ENCODE measurements at regions of chr2 and their contacts with region 1.

Region 1: GRCh38 chr2:170503971-170504809 is 210.9 kb upstream of the SP5 start:
- DNase-seq: peak; percentile 66
- H3K4me3 ChIP-seq: peak overlapping the region in 1 of 3 experiments; percentile 29
- H3K27ac ChIP-seq: peak overlapping the region; percentile 100
- H3K4me1 ChIP-seq: peaks cover 34% of the 10 kb centered on the region
- H3K27me3 ChIP-seq: no peaks in the 10 kb centered on the region
- CTCF ChIP-seq: no peak
- POLR2A ChIP-seq: no peak

Region 2: GRCh38 chr2:170022692-170023091 is 481.5 kb before region 1 on chr2:
- CTCF ChIA-PET with region 1: no interaction called
- POLR2A ChIA-PET with region 1: no interaction called
- dilution Hi-C with region 1: no loop called
- intact Hi-C with region 1: no loop called
- DNase-seq: no peak
- H3K4me3 ChIP-seq: no peak overlapping the region
- H3K27ac ChIP-seq: no peak overlapping the region
- H3K4me1 ChIP-seq: no peaks in the 10 kb centered on the region
- H3K27me3 ChIP-seq: no peaks in the 10 kb centered on the region
- CTCF ChIP-seq: no peak
- POLR2A ChIP-seq: no peak

Region 3: GRCh38 chr2:170530284-170530745 is 26.1 kb after region 1 on chr2:
- CTCF ChIA-PET with region 1: interaction called, 4 read pairs
- POLR2A ChIA-PET with region 1: no interaction called
- dilution Hi-C with region 1: no loop called
- intact Hi-C with region 1: loop called (anchors 1 kb)
- DNase-seq: peak; percentile 75
- H3K4me3 ChIP-seq: peak overlapping the region in 1 of 3 experiments; percentile 29
- H3K27ac ChIP-seq: no peak overlapping the region
- H3K4me1 ChIP-seq: peaks cover 21% of the 10 kb centered on the region
- H3K27me3 ChIP-seq: no peaks in the 10 kb centered on the region
- CTCF ChIP-seq: no peak
- POLR2A ChIP-seq: no peak

Region 4: DNA sequence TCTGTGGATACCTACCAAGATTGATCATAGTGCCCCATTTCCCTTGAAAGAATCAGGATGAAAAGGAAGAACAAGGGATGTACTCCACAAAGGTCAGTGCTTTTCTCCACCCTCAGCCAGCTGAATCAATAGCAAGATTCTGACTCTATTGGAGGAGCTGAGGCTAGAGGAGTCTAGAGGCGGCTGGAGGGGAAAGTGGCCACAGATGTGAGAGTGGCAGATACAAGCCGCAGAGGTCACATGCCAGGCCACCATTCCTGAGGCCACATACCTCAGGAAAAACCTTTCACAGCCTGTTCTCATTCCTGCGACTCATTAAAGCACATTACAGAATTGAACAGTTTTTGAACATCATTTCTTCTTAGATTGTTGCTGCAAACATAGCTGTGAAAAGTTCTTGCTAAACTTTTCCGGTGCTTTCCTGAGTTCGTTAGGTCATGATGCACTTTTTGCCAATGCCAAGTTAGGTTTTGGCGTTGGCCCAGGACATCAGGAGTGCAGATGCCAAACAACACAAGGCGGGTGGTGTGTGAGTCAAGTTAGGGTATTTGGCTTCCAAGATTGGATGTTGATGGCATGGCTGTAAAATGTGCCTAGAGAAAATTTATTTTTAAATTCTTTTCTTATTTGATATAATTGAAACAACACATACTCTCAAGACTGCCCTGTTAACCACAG is 50.2 kb after region 1 on chr2:
- CTCF ChIA-PET with region 1: no interaction called
- POLR2A ChIA-PET with region 1: no interaction called
- dilution Hi-C with region 1: no loop called
- intact Hi-C with region 1: loop called (anchors 1 kb)
- DNase-seq: peak; percentile 90
- H3K4me3 ChIP-seq: no peak overlapping the region
- H3K27ac ChIP-seq: peak overlapping the region; percentile 5
- H3K4me1 ChIP-seq: peaks cover 9% of the 10 kb centered on the region
- H3K27me3 ChIP-seq: no peaks in the 10 kb centered on the region
- CTCF ChIP-seq: no peak
- POLR2A ChIP-seq: no peak

Region 5: GRCh38 chr2:170715062-170715931 is 211.1 kb after region 1 on chr2 and contains the start of gene SP5:
- CTCF ChIA-PET with region 1: no interaction called
- POLR2A ChIA-PET with region 1: no interaction called
- dilution Hi-C with region 1: no loop called
- intact Hi-C with region 1: loop called (anchors 1 kb)
- DNase-seq: peak; percentile 49
- H3K4me3 ChIP-seq: peak within 1 kb of the TSS; percentile 17 to 63 (median 30)
- H3K27ac ChIP-seq: no peak within 1 kb of the TSS
- H3K4me1 ChIP-seq: peaks cover 19% of the 10 kb centered on the region
- H3K27me3 ChIP-seq: peaks cover 67 to 97% of the 10 kb centered on the region in 2 experiments
- CTCF ChIP-seq: no peak
- POLR2A ChIP-seq: no peak
- total RNA-seq, gene SP5: not detected in 2 replicates